ENCODE measurements at regions of chr6 and their contacts with region 1.

Region 1: DNA sequence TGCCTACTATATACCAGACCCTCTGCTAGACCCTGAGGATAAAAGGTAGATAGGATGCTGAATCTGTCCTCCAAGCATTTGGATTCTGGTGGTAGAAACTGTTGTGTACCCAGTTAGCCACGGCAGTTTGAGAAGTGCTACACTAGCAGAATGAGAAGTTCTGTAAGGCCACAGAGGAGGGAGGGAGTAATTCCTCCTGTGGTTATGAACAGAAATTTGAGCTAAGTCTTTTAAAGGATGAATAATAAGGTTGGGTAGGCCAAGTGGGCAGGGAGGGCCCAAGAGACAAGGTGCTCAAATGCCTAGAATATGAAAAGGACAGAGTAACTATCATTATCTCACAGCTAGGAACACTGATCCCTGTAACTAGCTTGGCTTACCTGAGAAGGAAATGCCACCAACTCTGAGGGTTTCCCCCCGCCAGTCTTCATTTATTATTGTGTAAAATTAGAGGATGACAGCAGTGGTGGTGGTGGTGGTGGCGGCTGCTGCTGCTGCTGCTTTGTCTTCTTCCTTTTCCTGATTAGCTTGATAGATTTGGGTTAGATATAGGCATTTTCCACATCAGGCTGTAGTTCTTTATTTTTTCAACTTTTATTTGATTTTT is 243.3 kb downstream of the PRL start:
- DNase-seq: peak in 1 of 9 experiments; percentile 5
- ATAC-seq: no peak
- H3K4me3 ChIP-seq: no peak overlapping the region
- H3K4me3 Mint-ChIP-seq: no peak overlapping the region
- H3K27ac ChIP-seq: no peak overlapping the region
- H3K27ac Mint-ChIP-seq: no peak overlapping the region
- H3K4me1 ChIP-seq: no peaks in the 10 kb centered on the region
- H3K4me1 Mint-ChIP-seq: no peaks in the 10 kb centered on the region
- H3K27me3 ChIP-seq: no peaks in the 10 kb centered on the region
- H3K27me3 Mint-ChIP-seq: no peaks in the 10 kb centered on the region
- CTCF ChIP-seq: no peak

Region 2: GRCh38 chr6:22015216-22015615 is 38.3 kb before region 1 on chr6:
- CTCF ChIA-PET with region 1: no interaction called
- POLR2A ChIA-PET with region 1: no interaction called
- intact Hi-C with region 1: loop called in 1 of 2 experiments (anchors 2 kb)
- DNase-seq: no peak
- ATAC-seq: no peak
- H3K4me3 ChIP-seq: no peak overlapping the region
- H3K4me3 Mint-ChIP-seq: no peak overlapping the region
- H3K27ac ChIP-seq: no peak overlapping the region
- H3K27ac Mint-ChIP-seq: no peak overlapping the region
- H3K4me1 ChIP-seq: no peaks in the 10 kb centered on the region
- H3K4me1 Mint-ChIP-seq: no peaks in the 10 kb centered on the region
- H3K27me3 ChIP-seq: no peaks in the 10 kb centered on the region
- H3K27me3 Mint-ChIP-seq: no peaks in the 10 kb centered on the region
- CTCF ChIP-seq: no peak